Activated naive CD4-positive, alpha-beta T cell treated with anti-CD3 and anti-CD28 coated beads for 36 hours (primary cell): ENCODE measurements at regions of chr15 and their contacts with region 1.

Region 1: GRCh38 chr15:29747837-29748417 is 74.3 kb downstream of the TJP1 start:
- DNase-seq: no peak
- H3K4me3 Mint-ChIP-seq: no peak overlapping the region
- H3K27ac Mint-ChIP-seq: no peak overlapping the region
- H3K4me1 Mint-ChIP-seq: no peaks in the 10 kb centered on the region
- H3K27me3 Mint-ChIP-seq: peaks cover 20% of the 10 kb centered on the region

Region 2: GRCh38 chr15:29139540-29140459 is 608.1 kb before region 1 on chr15:
- CTCF ChIA-PET with region 1: no interaction called
- intact Hi-C with region 1: loop called (anchors 10 kb)
- DNase-seq: peak; percentile 66
- H3K4me3 Mint-ChIP-seq: peak overlapping the region; percentile 9
- H3K27ac Mint-ChIP-seq: no peak overlapping the region
- H3K4me1 Mint-ChIP-seq: peaks cover 9% of the 10 kb centered on the region
- H3K27me3 Mint-ChIP-seq: peaks cover 48% of the 10 kb centered on the region

Region 3: DNA sequence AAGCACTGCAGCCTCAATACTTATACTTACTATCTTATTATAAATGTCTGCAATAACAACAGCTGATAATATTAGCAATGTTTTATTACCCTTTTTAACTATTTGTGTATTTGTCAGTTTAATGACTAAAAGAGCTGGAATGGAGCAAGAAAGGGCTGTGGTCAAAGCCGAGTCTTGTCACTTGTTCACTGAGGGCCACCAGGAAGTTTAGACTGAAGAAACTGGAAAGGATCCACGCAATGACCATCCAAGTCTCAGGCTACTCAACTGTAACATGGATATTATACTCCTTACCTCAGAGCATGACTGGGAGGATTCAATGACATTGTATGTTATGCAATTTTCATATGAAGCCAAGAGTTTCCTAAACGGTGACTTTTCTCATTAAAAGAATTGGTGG is 16.1 kb before region 1 on chr15:
- CTCF ChIA-PET with region 1: no interaction called
- intact Hi-C with region 1: no loop called
- DNase-seq: no peak
- H3K4me3 Mint-ChIP-seq: no peak overlapping the region
- H3K27ac Mint-ChIP-seq: no peak overlapping the region
- H3K4me1 Mint-ChIP-seq: no peaks in the 10 kb centered on the region
- H3K27me3 Mint-ChIP-seq: peaks cover 11% of the 10 kb centered on the region

Region 4: DNA sequence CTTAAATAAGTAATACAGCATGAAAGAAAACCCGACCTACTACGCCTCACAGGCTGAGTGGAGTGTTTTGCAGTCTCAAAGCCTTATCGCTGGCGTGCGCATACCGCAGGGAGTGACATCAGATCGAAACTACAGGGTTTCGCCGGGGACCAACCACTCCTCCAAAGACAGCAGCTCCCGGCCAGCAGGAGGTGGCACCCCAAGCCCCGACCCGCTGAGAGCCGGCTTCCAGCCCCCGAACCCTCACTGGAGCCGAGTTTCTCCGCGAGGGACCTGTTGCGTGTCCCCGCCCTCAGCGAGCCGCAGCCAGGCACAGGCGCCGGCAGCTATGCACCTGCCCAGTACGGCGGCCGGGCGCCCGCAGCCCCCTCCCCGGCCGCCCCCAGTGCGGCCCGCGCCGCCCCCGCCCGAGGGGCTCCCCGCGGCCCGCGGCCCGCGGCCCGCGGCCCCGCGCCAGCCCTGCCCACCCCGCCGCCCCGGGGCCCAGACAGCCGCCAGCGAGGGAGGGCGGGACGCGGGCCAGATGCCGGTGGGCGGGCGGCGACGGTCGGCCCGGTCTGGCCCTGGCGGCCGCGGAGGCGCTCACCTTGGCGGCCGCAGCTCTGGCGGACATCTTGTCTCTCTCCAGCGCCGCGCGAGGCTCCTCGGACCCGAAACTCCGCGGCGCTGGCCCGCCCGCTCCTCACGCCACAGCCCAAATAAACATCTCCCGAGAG is 73.6 kb after region 1 on chr15:
- CTCF ChIA-PET with region 1: no interaction called
- intact Hi-C with region 1: no loop called
- DNase-seq: peak; percentile 49
- H3K4me3 Mint-ChIP-seq: peak overlapping the region; percentile 36
- H3K27ac Mint-ChIP-seq: no peak overlapping the region
- H3K4me1 Mint-ChIP-seq: peaks cover 26% of the 10 kb centered on the region
- H3K27me3 Mint-ChIP-seq: peaks cover 56% of the 10 kb centered on the region

Region 5: GRCh38 chr15:29859973-29860715 is 112.2 kb after region 1 on chr15:
- CTCF ChIA-PET with region 1: no interaction called
- intact Hi-C with region 1: no loop called
- DNase-seq: no peak
- H3K4me3 Mint-ChIP-seq: no peak overlapping the region
- H3K27ac Mint-ChIP-seq: no peak overlapping the region
- H3K4me1 Mint-ChIP-seq: no peaks in the 10 kb centered on the region
- H3K27me3 Mint-ChIP-seq: peaks cover 38% of the 10 kb centered on the region

Region 6: DNA sequence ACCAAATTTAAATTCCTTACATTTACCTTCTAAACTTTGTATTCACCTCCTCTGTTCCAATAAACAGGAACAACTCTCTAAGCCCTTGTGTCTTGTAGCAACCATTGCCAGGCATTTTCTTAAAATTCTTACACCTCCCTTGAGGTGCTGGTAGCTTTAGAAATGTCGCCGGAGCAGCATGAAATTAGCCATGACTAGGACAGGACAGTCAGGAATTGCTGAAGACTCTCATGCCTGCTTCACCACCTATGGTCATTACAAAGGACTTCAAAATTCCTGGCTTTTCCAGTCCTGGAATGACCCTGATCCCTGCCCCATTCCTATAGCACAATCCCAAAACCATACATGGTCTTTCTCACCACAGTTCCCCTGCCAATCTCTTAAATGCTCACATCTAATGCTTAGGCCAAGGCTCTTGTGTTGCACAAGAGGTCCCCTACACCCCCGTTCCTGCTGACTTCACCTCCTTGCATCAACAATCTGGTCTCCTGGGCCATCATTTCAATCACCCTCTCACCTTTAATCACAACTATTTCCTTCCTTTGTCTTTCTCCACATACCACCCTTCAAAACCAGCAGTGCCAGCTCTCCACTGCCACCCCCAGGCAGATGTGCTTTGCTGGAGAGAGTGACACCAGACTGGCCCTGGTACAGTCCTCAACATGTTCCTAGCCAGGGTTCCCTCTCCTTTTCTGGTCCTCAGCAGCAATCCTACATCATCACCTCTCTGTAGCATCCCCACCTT is 187.5 kb after region 1 on chr15:
- CTCF ChIA-PET with region 1: no interaction called
- intact Hi-C with region 1: loop called (anchors 10 kb)
- DNase-seq: peak; percentile 10
- H3K4me3 Mint-ChIP-seq: no peak overlapping the region
- H3K27ac Mint-ChIP-seq: no peak overlapping the region
- H3K4me1 Mint-ChIP-seq: no peaks in the 10 kb centered on the region
- H3K27me3 Mint-ChIP-seq: peaks cover 33% of the 10 kb centered on the region

Region 7: DNA sequence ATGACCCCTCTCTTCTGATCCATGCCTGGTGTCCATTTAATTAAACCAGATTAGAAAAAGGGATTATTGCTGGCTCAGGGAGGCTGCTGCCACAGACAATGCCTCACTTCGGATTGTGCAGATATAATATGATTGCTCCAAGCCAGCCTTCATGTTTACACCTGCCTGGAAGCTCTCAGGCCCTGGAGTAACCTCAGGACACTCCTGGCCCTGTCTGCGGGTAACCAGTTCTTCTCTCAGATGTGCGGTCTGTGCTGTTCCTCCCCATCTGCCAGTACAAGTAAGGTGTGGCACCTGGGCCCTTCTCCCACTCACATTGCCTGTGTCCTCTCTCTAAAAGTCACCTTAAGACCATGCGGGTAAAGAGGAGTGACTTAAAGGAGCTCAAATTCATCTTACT is 326.0 kb after region 1 on chr15:
- CTCF ChIA-PET with region 1: interaction called, 3 read pairs
- intact Hi-C with region 1: loop called (anchors 10 kb)
- DNase-seq: no peak
- H3K4me3 Mint-ChIP-seq: no peak overlapping the region
- H3K27ac Mint-ChIP-seq: no peak overlapping the region
- H3K4me1 Mint-ChIP-seq: no peaks in the 10 kb centered on the region
- H3K27me3 Mint-ChIP-seq: peaks cover 20% of the 10 kb centered on the region